AG04449 (cell line): ENCODE measurements at regions of chr3 and their contacts with region 1.

Region 1: DNA sequence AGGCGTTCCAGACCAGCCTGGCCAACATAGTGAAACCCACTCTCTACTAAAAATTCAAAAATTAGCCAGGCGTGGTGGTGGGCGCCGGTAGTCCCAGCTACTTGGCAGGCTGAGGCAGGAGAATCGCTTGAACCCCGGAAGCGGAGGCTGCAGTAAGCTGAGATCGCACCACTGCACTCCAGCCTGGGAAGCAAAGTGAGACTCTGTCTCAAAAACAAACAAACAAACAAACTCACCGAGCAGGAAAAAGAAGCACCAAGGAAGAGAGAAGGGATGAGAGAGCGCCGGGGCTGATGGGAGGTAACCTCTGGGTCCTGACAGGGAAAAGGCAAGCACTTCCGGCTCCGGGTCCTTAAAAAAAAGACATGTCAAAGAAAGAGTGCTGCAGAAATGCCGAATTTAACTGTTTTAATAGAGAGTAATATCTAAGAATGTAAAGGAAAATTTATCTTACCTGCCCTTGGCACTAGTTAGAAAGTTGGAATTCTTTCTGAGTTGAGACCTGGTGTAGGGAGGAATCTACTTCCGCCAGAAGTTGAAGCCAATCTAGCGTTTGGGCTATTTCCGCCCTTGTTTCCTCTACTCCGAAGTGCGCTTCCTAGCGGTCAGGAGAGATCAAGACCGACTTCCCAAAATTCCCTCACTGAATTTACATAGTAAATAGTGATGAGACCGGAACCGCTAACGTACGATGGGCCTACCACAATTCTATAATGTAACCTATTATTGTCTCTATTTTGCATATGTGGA is 29.1 kb downstream of the EFCAB12 start:
- DNase-seq: peak; percentile 83
- H3K4me3 ChIP-seq: peak overlapping the region; percentile 87
- CTCF ChIP-seq: peak; percentile 77

Region 2: DNA sequence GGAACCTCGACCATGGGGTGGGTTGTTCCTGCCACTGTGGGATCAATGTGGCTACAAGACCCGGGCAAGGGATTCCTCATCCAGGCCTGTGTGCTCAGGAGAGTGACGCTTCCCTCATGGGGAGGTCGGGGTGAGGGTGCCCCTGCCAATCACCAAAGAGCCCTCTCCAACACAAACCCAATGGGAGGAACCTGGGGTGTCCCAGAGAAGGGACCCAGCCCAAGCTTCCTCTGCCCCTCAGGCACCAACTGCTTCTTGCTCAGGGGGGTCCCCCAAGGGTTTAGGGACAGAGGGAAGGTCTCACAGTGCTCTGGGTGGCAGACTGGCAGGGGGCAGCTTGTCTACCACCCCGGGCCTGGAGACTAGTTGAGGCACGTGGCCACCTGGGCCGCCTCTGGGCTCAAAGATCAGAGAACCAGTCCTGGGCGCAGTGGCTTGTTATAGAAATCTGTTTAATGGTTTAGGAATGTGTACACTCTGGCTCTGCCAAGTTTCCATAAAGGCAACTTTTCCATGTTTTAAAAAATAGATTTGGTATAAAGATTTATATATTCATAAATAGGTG is 312.1 kb before region 1 on chr3:
- CTCF ChIA-PET with region 1: no interaction called
- POLR2A ChIA-PET with region 1: no interaction called
- DNase-seq: no peak
- H3K4me3 ChIP-seq: no peak overlapping the region
- CTCF ChIP-seq: no peak

Region 3: DNA sequence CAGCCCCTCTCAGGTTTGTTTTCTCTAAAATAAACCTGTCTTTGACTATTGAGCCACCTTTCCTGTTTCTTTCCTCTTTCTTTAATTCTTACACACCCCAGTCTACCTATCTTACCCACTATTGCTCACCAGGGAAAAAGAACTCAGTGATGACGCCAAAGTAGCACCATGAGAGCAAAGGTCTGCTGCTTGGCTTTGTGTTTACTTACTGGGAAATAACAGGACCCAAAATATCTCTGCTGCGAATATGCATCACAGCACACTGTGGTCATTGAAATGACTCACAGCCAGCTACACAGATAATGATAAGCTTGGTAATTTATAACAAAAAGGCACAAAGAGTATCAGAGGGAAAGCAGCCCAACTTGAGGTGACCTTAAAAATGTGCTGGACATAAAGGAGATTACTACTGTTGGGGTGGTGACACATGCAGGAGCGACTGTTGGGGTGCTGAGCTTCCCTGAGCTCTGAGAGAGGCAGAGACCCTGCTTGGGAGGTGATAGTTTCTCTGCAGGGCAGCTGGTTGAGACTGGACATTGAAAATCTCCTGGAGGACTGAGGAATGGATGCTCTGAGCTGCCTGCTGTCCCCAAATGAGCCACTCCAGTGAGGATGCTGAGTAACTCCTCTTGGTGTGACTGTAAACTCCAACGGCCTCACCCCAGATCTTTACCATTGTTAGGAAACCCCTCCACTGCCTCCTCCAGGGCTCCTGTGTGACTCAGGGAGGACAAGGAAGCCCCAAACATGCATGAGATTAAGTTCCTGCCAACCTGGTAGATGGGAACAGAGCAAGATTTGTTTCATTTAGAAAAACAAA is 14.6 kb after region 1 on chr3:
- CTCF ChIA-PET with region 1: interaction called, 30 read pairs
- POLR2A ChIA-PET with region 1: no interaction called
- DNase-seq: peak; percentile 61
- H3K4me3 ChIP-seq: no peak overlapping the region
- CTCF ChIP-seq: no peak